Left ventricle myocardium inferior (tissue), 1 donor: ENCODE measurements at regions of chr7 and their contacts with region 1.

Region 1: DNA sequence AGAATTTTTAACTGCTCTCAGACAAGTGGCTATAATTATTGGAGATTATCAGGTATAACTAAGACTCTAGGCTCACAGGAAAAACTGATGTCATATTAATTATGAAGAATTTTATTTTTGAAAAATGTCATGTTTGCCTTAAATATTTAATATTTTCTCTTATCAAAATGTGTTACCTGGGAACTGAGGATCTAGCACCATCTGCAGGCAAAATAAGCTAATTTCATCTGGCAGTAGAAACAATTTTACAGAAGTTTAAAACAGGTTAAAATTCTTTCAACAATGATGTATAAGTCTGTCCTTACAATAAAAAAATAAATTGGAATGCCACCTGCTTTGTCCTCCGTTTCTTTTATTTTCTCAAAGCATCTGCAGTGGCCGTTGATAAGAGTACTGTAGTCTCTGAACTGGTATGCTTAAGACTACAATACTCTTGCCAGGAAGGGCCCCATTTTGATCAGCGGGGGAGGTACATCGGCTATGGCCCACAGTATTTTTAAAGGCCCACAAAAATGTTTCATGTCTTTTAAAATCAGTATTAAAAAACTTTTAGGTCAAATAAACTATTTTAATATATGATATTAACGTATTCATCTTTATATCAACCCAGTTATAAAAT is 81.3 kb downstream of the VWDE start:
- DNase-seq: no peak
- H3K4me3 ChIP-seq: no peak overlapping the region
- H3K27ac ChIP-seq: no peak overlapping the region
- H3K4me1 ChIP-seq: no peaks in the 10 kb centered on the region
- H3K27me3 ChIP-seq: no peaks in the 10 kb centered on the region
- CTCF ChIP-seq: peak; percentile 76

Region 2: DNA sequence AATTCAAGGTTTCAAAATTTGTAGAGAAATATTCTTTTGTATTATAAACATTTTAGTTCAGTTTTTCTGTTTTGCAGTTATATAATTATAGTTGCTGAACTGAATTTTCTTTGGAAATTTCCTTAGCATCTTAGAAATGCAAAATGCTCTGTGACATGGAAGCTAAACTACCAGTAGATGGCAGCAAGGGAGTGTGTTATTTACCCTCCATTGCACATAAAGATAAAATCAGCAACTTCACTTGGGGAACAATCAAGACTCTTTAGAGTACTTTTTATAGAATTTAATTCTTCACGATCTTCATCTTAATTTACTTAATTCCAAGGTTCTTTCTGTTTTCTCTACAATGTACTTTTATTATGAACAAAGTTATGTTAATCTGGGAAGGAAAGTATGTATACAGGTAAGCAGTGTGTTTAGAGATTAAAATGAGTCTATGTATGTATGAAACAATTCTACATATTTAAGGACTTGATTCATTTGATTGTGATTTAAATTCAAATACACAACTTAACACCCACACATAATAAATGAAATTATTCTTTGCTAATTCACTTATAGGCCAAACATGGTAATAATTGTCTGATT is 894.6 kb before region 1 on chr7:
- intact Hi-C with region 1: loop called (anchors 5 kb)
- DNase-seq: no peak
- H3K4me3 ChIP-seq: no peak overlapping the region
- H3K27ac ChIP-seq: no peak overlapping the region
- H3K4me1 ChIP-seq: no peaks in the 10 kb centered on the region
- H3K27me3 ChIP-seq: no peaks in the 10 kb centered on the region
- CTCF ChIP-seq: peak; percentile 79

Region 3: GRCh38 chr7:11552676-11553296 is 769.6 kb before region 1 on chr7:
- intact Hi-C with region 1: no loop called
- DNase-seq: no peak
- H3K4me3 ChIP-seq: no peak overlapping the region
- H3K27ac ChIP-seq: no peak overlapping the region
- H3K4me1 ChIP-seq: no peaks in the 10 kb centered on the region
- H3K27me3 ChIP-seq: no peaks in the 10 kb centered on the region
- CTCF ChIP-seq: no peak

Region 4: GRCh38 chr7:11831736-11832495 is 490.5 kb before region 1 on chr7 and contains the start of gene THSD7A:
- intact Hi-C with region 1: loop called (anchors 10 kb)
- DNase-seq: peak; percentile 42
- H3K4me3 ChIP-seq: peak within 1 kb of the TSS; percentile 72
- H3K27ac ChIP-seq: peak within 1 kb of the TSS; percentile 76
- H3K4me1 ChIP-seq: peaks cover 27% of the 10 kb centered on the region
- H3K27me3 ChIP-seq: peaks cover 7% of the 10 kb centered on the region
- CTCF ChIP-seq: no peak
- total RNA-seq, gene THSD7A: 1.6 TPM

Region 5: DNA sequence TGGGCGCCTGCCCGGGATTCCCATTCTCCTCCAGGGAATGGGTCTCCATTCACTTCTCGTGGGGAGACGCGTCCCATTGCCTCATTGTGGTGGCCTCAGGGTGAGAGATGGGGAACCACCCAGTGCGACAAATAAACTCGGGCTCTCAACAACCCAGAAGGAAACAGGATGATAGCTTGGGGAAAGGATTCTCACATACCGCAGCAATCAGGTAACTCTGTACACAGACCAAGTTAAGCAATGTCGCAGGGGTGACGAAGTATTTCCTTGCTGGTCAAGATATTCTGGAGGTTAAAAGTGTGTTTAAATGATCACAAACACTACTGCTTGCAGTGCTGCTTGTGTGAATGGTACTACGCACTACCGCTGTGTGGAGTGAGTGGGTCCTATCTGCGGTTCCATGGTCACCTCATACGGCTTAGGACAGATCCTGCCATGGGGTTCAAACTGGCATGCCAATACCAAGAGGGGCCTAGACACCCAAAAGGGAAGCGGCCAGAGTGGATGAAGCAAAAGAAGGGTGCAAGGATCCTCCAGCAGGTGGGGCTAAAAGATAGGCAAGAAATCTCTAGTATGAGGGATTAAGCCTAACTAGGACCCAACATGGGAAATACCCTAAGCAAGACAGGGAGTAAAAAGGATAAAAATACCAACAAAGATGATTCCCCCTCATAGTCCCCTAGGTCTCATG is 255.1 kb before region 1 on chr7:
- intact Hi-C with region 1: loop called (anchors 5 kb)
- DNase-seq: no peak
- H3K4me3 ChIP-seq: no peak overlapping the region
- H3K27ac ChIP-seq: no peak overlapping the region
- H3K4me1 ChIP-seq: no peaks in the 10 kb centered on the region
- H3K27me3 ChIP-seq: no peaks in the 10 kb centered on the region
- CTCF ChIP-seq: peak; percentile 70